Heart left ventricle (tissue), 16 donors: ENCODE measurements at regions of chr9 and their contacts with region 1.

Region 1: DNA sequence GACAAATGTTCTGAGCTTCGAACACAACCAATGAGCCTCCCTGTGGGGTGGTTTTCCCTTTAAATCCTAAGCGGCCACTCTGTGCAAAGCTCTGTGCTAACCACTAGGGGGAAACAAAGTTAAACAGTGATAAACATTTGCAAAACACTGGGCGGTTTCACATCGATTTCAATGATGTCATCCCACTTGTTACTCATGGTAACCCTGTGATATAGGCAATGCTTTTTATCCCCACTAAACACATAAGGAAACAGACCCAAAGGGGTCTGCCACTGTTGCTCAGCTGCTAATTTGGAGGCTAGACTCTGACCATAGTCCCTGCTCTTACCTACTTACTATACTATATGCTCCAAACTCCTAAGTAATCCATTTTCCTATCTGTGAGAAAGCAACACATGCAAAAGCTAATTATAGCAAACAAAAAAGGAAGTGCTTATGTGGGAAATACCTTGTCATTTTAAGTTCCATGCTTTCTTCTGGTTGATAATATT is 57.3 kb downstream of the PTPN3 start:
- DNase-seq: peak in 1 of 5 donors; percentile 45
- ATAC-seq: peak; percentile 28 to 82 (median 69)
- H3K4me3 ChIP-seq: no peak overlapping the region
- H3K27ac ChIP-seq: no peak overlapping the region
- H3K4me1 ChIP-seq: peaks cover 0 to 28% (median 14%) of the 10 kb centered on the region in 12 donors
- H3K27me3 ChIP-seq: peaks cover 0 to 4% (median 0%) of the 10 kb centered on the region in 9 donors
- CTCF ChIP-seq: peak; percentile 56 to 80 (median 72)
- POLR2A ChIP-seq: no peak

Region 2: GRCh38 chr9:109381011-109381729 is 59.7 kb before region 1 on chr9:
- intact Hi-C with region 1: loop called in 1 of 10 experiments (anchors 10 kb)
- DNase-seq: no peak
- ATAC-seq: no peak
- H3K4me3 ChIP-seq: no peak overlapping the region
- H3K27ac ChIP-seq: no peak overlapping the region
- H3K4me1 ChIP-seq: no peaks in the 10 kb centered on the region
- H3K27me3 ChIP-seq: no peaks in the 10 kb centered on the region
- CTCF ChIP-seq: no peak
- POLR2A ChIP-seq: no peak

Region 3: GRCh38 chr9:109469646-109470358 is 29.0 kb after region 1 on chr9:
- intact Hi-C with region 1: loop called in 5 of 10 experiments (anchors 2 to 5 kb)
- DNase-seq: peak in 4 of 5 donors; percentile 61 to 66 (median 64)
- ATAC-seq: peak; percentile 79 to 89 (median 84)
- H3K4me3 ChIP-seq: no peak overlapping the region
- H3K27ac ChIP-seq: peak overlapping the region in 8 of 12 donors; percentile 1 to 47 (median 23)
- H3K4me1 ChIP-seq: peaks cover 0 to 33% (median 11%) of the 10 kb centered on the region in 12 donors
- H3K27me3 ChIP-seq: peaks cover 0 to 17% (median 0%) of the 10 kb centered on the region in 9 donors
- CTCF ChIP-seq: peak; percentile 79 to 91 (median 86)
- POLR2A ChIP-seq: no peak

Region 4: GRCh38 chr9:109520478-109521132 is 79.8 kb after region 1 on chr9:
- intact Hi-C with region 1: loop called in 9 of 10 experiments (anchors 2 to 10 kb)
- DNase-seq: peak in 3 of 5 donors; percentile 36 to 40 (median 39)
- ATAC-seq: peak; percentile 46 to 92 (median 86)
- H3K4me3 ChIP-seq: no peak overlapping the region
- H3K27ac ChIP-seq: no peak overlapping the region
- H3K4me1 ChIP-seq: no peaks in the 10 kb centered on the region
- H3K27me3 ChIP-seq: peaks cover 0 to 2% (median 0%) of the 10 kb centered on the region in 9 donors
- CTCF ChIP-seq: peak; percentile 66 to 89 (median 84)
- POLR2A ChIP-seq: no peak

Region 5: DNA sequence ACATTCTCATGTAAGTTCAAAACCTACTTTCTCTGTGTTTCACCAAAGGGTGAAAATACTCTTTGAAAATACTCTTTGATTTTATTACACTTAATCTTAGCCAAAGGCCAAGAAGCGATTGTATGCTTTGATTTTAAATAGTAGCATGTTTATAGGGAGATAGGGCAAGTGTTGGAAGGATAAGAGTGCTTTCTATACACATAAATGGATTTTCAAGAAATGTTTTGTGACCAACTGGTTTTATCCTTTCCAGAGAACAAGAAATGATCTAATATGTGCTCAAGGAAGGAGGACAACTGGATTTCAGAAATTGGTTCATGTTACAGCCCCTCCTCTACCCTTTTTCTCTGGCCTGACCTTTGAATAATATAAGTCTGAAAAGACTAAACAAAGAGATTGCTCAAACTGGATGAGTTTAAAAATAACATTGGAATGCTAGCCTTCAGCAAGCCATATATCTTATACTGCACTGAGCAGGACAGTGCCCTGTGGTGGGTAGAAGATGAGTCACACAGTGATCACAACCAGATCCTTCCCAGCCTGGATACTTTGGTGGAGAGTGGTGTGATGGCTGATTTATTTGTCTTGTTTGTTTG is 352.2 kb after region 1 on chr9:
- intact Hi-C with region 1: no loop called
- DNase-seq: no peak
- ATAC-seq: peak in 3 of 4 donors; percentile 37 to 64 (median 60)
- H3K4me3 ChIP-seq: no peak overlapping the region
- H3K27ac ChIP-seq: peak overlapping the region in 5 of 12 donors; percentile 6 to 38 (median 14)
- H3K4me1 ChIP-seq: peaks cover 0 to 84% (median 29%) of the 10 kb centered on the region in 12 donors
- H3K27me3 ChIP-seq: no peaks in the 10 kb centered on the region
- CTCF ChIP-seq: no peak
- POLR2A ChIP-seq: no peak

Region 6: DNA sequence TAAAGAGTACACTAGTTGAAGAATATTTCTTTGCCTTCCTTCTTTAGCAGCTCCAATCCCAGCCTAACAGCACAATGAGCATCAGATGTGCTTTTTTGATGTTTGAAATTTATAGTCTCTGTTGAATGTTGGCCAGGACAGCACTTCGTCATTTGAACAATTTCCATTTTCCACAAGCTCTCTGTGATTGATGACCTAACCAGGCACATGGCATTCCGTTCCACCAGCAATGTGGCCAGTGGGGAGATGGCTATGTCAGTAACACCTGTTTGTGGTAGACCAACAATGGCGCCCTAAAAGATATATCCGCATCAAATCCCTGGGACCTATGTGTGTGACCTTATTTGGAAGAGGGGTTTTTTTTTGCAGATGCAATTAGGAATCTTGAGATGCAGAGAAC is 405.9 kb after region 1 on chr9:
- intact Hi-C with region 1: no loop called
- DNase-seq: no peak
- ATAC-seq: no peak
- H3K4me3 ChIP-seq: no peak overlapping the region
- H3K27ac ChIP-seq: no peak overlapping the region
- H3K4me1 ChIP-seq: peaks cover 0 to 32% (median 10%) of the 10 kb centered on the region in 12 donors
- H3K27me3 ChIP-seq: no peaks in the 10 kb centered on the region
- CTCF ChIP-seq: no peak
- POLR2A ChIP-seq: no peak